ENCODE measurements at regions of chr9 and their contacts with region 1.

Region 1: GRCh38 chr9:12191630-12192029 is 501.6 kb upstream of the TYRP1 start:
- DNase-seq: no peak
- ATAC-seq: no peak
- H3K4me3 ChIP-seq: no peak overlapping the region
- H3K4me3 Mint-ChIP-seq: no peak overlapping the region
- H3K27ac ChIP-seq: no peak overlapping the region
- H3K27ac Mint-ChIP-seq: no peak overlapping the region
- H3K4me1 ChIP-seq: no peaks in the 10 kb centered on the region
- H3K4me1 Mint-ChIP-seq: no peaks in the 10 kb centered on the region
- H3K27me3 ChIP-seq: no peaks in the 10 kb centered on the region
- H3K27me3 Mint-ChIP-seq: no peaks in the 10 kb centered on the region
- CTCF ChIP-seq: no peak

Region 2: DNA sequence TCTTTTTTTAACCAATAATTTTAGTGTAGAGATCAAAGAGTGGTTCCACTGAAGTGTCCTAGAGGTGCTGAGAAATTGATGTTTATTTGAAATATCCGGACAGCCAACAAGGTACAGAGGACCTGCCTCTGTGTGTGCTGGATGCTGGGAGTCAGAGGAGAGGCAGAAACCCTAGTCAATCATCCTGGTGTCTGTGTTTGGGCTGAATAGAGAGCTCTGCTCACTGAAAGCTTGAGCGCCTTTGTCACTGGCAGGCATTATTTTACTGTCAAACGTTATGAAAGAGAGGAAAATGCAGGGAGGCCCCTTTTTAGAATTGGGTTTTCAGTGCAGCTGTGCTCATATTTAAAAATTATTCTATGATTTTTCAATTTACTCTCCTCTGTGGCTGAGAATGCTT is 21.2 kb after region 1 on chr9:
- CTCF ChIA-PET with region 1: no interaction called
- POLR2A ChIA-PET with region 1: no interaction called
- intact Hi-C with region 1: loop called in 1 of 2 experiments (anchors 2 kb)
- DNase-seq: no peak
- ATAC-seq: no peak
- H3K4me3 ChIP-seq: no peak overlapping the region
- H3K4me3 Mint-ChIP-seq: no peak overlapping the region
- H3K27ac ChIP-seq: no peak overlapping the region
- H3K27ac Mint-ChIP-seq: no peak overlapping the region
- H3K4me1 ChIP-seq: no peaks in the 10 kb centered on the region
- H3K4me1 Mint-ChIP-seq: no peaks in the 10 kb centered on the region
- H3K27me3 ChIP-seq: no peaks in the 10 kb centered on the region
- H3K27me3 Mint-ChIP-seq: no peaks in the 10 kb centered on the region
- CTCF ChIP-seq: no peak

Measured in CD8-positive, alpha-beta T cell (primary cell).